Activated CD4-positive, alpha-beta T cell treated with anti-CD3 and anti-CD28 coated beads, Interleukin-2, amount 10 ng/mL, durations not matched to agents 24 days and 14 days (primary cell): ENCODE measurements at regions of chr5 and their contacts with region 1.

Region 1: DNA sequence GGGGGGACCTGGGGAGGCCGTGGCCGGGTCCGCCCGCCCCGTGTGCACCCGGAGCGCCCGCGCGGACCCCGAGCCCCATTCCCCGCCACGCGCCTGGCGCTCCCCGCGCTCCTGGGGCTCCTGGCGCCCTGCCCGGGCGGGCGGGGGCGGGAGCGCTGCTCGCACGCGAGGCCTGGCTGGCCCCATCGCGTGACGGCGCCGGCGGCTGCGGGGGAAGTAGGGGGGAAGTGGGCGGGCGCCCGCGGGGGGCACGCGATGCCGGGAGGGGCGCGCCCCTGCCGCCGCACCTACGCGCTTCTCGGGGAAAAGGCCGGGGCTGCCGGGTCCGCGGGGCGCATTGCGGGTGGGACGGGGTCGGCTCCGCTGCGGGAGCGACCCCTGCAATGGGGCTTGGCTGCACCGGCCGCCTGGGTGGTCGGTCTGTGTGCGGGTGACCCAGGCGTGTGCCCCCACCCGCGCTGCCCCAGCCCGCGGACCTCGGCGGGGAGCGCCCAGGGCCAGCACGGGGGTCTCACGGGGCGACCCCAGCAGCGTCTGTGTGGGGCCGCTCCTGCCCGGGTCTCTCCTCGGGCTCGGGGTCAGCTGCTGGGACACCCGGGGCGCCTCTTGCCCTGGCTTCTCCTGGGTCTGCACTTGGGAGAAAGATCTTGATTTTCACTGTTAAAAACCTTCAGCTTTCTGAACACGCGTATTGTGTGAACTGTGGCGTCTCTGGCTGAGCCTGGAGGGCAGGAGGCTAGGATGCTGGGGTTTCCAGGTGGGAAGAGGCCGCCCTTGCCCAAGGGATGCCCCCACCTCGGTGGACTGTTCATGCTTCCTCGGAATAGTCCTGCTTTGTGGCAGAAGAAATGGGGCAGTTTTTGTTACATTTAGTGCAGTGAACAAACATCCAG is 52.4 kb downstream of the AHRR start:
- DNase-seq: peak; percentile 94
- H3K4me3 Mint-ChIP-seq: peak overlapping the region; percentile 74
- H3K27ac Mint-ChIP-seq: peak overlapping the region; percentile 95
- H3K4me1 Mint-ChIP-seq: peaks cover 53% of the 10 kb centered on the region
- H3K27me3 Mint-ChIP-seq: no peaks in the 10 kb centered on the region

Region 2: GRCh38 chr5:411728-412127 is 37.8 kb after region 1 on chr5:
- intact Hi-C with region 1: loop called (anchors 5 kb)
- DNase-seq: no peak
- H3K4me3 Mint-ChIP-seq: no peak overlapping the region
- H3K27ac Mint-ChIP-seq: peak overlapping the region; percentile 51
- H3K4me1 Mint-ChIP-seq: peaks cover 22% of the 10 kb centered on the region
- H3K27me3 Mint-ChIP-seq: no peaks in the 10 kb centered on the region

Region 3: GRCh38 chr5:463952-464351 is 90.0 kb after region 1 on chr5:
- intact Hi-C with region 1: loop called (anchors 5 kb)
- DNase-seq: peak; percentile 89
- H3K4me3 Mint-ChIP-seq: peak overlapping the region; percentile 7
- H3K27ac Mint-ChIP-seq: peak overlapping the region; percentile 43
- H3K4me1 Mint-ChIP-seq: peaks cover 39% of the 10 kb centered on the region
- H3K27me3 Mint-ChIP-seq: no peaks in the 10 kb centered on the region